OCI-LY7 (cell line): ENCODE measurements at regions of chr2 and their contacts with region 1.

Region 1: GRCh38 chr2:20675701-20676352 is 8.9 kb downstream of the GDF7 start:
- DNase-seq: peak; percentile 84
- H3K4me3 ChIP-seq: peak overlapping the region; percentile 0
- H3K27ac ChIP-seq: peak overlapping the region; percentile 86
- H3K4me1 ChIP-seq: peaks cover 38% of the 10 kb centered on the region
- CTCF ChIP-seq: no peak

Region 2: DNA sequence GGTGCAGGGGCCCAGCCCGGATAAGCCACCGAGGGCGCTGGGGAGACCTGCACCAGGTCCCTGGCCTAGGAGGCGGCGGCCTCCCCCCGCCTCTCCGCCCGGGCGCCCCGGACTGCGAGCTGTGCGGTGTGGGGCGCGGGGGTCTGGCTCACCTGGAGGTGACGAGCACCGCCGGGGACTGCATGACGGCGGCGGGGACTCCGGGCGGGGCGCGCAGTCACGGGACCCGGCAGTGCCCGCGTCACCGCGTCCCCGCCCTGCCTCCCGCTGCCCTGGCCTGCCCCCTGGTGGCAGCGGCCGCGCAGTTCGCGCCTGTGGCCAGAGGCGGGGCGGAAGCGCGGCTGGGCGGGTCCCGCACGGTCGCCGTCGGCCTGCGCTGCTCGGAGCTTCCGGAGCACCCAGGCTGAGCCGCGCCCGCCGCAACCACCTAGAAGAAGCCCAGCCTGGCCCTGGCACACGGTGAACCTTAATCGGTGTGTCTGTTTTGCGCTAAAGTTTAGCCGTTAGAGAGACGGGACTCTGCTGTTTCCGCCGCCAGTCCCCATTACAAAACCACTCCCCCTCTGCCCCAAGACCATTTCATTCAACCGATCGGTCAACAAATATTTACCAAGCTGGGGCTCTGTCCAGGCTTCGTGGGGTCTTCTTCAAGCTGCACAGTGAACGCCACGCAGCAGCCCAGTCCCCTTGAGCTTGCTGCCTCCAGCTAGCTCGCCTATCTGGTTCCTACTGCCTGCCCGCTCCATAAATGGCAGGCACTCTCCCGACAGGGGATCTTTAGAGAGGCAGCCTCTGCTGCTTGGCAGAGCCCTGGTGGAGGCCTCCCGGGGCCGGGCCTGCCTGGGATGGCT is 24.7 kb before region 1 on chr2 and contains the start of gene HS1BP3:
- CTCF ChIA-PET with region 1: interaction called, 12 read pairs
- POLR2A ChIA-PET with region 1: interaction called, 24 read pairs
- intact Hi-C with region 1: no loop called
- DNase-seq: peak; percentile 88
- H3K4me3 ChIP-seq: peak within 1 kb of the TSS; percentile 77
- H3K27ac ChIP-seq: peak within 1 kb of the TSS; percentile 26
- H3K4me1 ChIP-seq: peaks cover 15% of the 10 kb centered on the region
- CTCF ChIP-seq: peak; percentile 76
- total RNA-seq, gene HS1BP3: 9.5 and 10.6 TPM in 2 replicates

Region 3: DNA sequence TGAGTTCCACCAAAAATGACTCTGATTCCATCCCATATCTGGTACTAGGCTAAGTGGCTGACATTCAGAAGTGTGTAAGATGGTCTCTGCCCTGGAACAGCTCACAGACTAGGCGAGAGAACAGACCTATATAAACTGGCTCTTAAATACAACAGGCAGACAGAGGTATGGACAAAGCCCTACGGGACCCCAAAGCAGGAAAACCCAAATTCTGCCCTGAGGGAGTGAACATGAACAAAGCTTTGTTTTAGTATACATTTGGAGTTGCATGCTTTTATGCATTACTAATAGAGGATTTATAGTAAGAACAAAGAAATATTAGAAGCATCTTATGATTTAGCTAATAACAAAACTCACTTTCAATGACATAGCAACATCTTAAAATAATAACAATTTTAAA is 16.3 kb after region 1 on chr2:
- CTCF ChIA-PET with region 1: interaction called, 8 read pairs
- POLR2A ChIA-PET with region 1: interaction called, 28 read pairs
- intact Hi-C with region 1: no loop called
- DNase-seq: no peak
- H3K4me3 ChIP-seq: no peak overlapping the region
- H3K27ac ChIP-seq: no peak overlapping the region
- H3K4me1 ChIP-seq: peaks cover 30% of the 10 kb centered on the region
- CTCF ChIP-seq: no peak

Region 4: GRCh38 chr2:20744366-20745335 is 68.8 kb after region 1 on chr2:
- CTCF ChIA-PET with region 1: interaction called, 7 read pairs
- POLR2A ChIA-PET with region 1: interaction called, 9 read pairs
- intact Hi-C with region 1: loop called (anchors 2 kb)
- DNase-seq: peak; percentile 48
- H3K4me3 ChIP-seq: peak overlapping the region; percentile 42
- H3K27ac ChIP-seq: peak overlapping the region; percentile 52
- H3K4me1 ChIP-seq: peaks cover 34% of the 10 kb centered on the region
- CTCF ChIP-seq: no peak

Region 5: GRCh38 chr2:20962939-20963557 is 287.2 kb after region 1 on chr2:
- CTCF ChIA-PET with region 1: interaction called, 3 read pairs
- POLR2A ChIA-PET with region 1: interaction called, 3 read pairs
- intact Hi-C with region 1: loop called (anchors 5 kb)
- DNase-seq: peak; percentile 66
- H3K4me3 ChIP-seq: no peak overlapping the region
- H3K27ac ChIP-seq: no peak overlapping the region
- H3K4me1 ChIP-seq: no peaks in the 10 kb centered on the region
- CTCF ChIP-seq: peak; percentile 91